Cardiac septum (tissue), 1 donor: ENCODE measurements at regions of chr9 and their contacts with region 1.

Region 1: DNA sequence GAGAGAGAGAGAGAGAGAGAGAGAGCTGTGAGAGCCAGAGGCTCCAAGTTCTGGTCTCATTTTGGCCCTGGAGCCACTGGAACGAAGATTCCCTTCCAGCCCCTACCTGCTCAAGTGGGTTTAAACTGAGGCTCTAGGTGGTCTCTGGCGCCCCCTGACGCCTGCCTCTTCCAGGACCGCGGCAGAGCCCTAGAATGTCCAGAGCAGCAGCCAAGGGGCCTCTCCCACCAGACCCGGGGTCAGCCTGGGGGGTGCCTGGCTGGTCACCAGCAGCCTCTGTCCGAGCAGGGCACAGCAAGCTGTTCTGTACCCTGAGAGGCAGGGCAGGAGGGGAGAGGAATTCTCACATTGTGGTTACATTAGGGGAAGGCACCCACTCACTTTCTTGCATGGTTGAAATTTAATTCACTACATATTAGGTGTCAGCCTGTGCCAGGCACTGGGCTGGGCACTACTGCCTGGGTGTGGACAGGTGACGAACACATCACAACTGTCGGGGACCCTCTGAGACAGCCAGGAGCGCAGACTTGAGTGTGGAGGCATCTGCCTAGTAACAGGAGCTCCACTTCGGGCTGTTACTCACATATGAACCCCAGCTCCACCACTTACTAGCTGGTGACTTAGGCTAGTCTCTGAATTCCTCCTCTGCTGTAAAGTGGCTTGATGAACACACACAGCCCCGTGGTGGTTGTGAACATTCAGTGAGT is 44.5 kb downstream of the AMBP start:
- DNase-seq: peak; percentile 75

Region 2: GRCh38 chr9:113682297-113682771 is 351.2 kb before region 1 on chr9:
- intact Hi-C with region 1: loop called (anchors 5 kb)
- DNase-seq: peak; percentile 80

Region 3: GRCh38 chr9:113737517-113738271 is 295.9 kb before region 1 on chr9:
- intact Hi-C with region 1: loop called (anchors 2 kb)
- DNase-seq: no peak

Region 4: DNA sequence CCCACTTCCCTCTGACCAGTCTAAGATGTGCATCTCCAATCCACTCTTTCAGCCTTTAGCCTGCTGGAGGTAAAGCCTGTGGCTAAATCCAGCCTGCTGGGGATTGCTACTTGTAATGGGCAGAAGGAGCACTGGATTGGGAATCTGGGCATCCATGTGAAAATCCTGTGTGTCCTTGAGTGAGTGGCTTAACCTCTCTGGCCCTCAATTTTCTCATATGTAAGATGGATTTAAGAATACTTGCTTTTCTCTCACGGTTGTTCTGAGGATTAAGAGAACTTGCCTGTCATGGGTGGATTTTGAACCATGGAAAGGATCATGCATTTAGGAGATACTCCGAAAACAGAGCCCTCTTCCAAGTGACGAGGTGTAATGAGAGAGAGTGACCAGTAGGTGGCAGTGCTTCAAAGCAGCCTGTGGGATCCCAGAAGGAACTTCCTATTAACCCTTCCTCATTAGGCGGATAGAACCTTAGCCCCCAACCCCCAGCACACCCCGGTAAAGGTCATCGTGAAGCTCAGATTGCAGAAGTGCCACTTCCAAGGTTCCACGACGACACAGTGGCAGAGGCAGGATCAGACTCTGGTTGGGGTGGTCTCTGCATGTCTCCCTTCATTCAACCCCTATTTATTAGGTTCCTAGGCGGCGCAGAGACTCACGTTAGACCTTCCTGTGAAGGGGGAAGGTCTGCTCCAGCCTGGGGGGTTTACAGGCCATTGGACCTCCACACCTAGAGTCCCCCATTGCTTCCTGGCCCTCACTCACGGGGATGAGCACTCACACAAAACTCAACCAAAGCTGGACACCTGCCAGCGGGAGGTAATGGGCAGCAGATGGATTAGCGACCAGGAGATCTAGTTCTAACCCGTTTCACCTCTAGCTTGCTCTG is 226.1 kb before region 1 on chr9:
- intact Hi-C with region 1: loop called (anchors 2 kb)
- DNase-seq: no peak

Region 5: GRCh38 chr9:113844466-113844865 is 189.1 kb before region 1 on chr9:
- intact Hi-C with region 1: loop called (anchors 10 kb)
- DNase-seq: no peak